ENCODE measurements at regions of chr12 and their contacts with region 1.

Region 1: GRCh38 chr12:6451348-6452244 is at the start of gene TAPBPL:
- DNase-seq: peak; percentile 94
- ATAC-seq: peak; percentile 77
- H3K4me3 Mint-ChIP-seq: peak within 1 kb of the TSS; percentile 97
- H3K27ac Mint-ChIP-seq: peak within 1 kb of the TSS; percentile 99
- H3K4me1 Mint-ChIP-seq: peaks cover 53% of the 10 kb centered on the region
- H3K27me3 Mint-ChIP-seq: no peaks in the 10 kb centered on the region
- CTCF ChIP-seq: no peak
- total RNA-seq, gene TAPBPL: 23.3 to 28.0 TPM

Region 2: GRCh38 chr12:6434205-6435140 is 17.1 kb before region 1 on chr12:
- CTCF ChIA-PET with region 1: interaction called, 7 read pairs
- POLR2A ChIA-PET with region 1: interaction called, 267 read pairs
- intact Hi-C with region 1: no loop called
- DNase-seq: peak; percentile 72
- ATAC-seq: peak; percentile 84
- H3K4me3 Mint-ChIP-seq: peak overlapping the region; percentile 63
- H3K27ac Mint-ChIP-seq: peak overlapping the region; percentile 90
- H3K4me1 Mint-ChIP-seq: peaks cover 71% of the 10 kb centered on the region
- H3K27me3 Mint-ChIP-seq: no peaks in the 10 kb centered on the region
- CTCF ChIP-seq: no peak

Region 3: GRCh38 chr12:6493497-6494257 is 42.1 kb after region 1 on chr12 and contains the start of gene NCAPD2:
- CTCF ChIA-PET with region 1: interaction called, 3 read pairs
- POLR2A ChIA-PET with region 1: interaction called, 13 read pairs
- intact Hi-C with region 1: no loop called
- DNase-seq: peak; percentile 98
- ATAC-seq: peak; percentile 88
- H3K4me3 Mint-ChIP-seq: peak within 1 kb of the TSS; percentile 99
- H3K27ac Mint-ChIP-seq: peak within 1 kb of the TSS; percentile 99
- H3K4me1 Mint-ChIP-seq: peaks cover 31% of the 10 kb centered on the region
- H3K27me3 Mint-ChIP-seq: no peaks in the 10 kb centered on the region
- CTCF ChIP-seq: no peak
- total RNA-seq, gene NCAPD2: 195 to 196 TPM

Measured in activated CD8-positive, alpha-beta T cell treated with anti-CD3 and anti-CD28 coated beads for 36 hours (primary cell).